CD8-positive, alpha-beta T cell (primary cell): ENCODE measurements at regions of chr9 and their contacts with region 1.

Region 1: DNA sequence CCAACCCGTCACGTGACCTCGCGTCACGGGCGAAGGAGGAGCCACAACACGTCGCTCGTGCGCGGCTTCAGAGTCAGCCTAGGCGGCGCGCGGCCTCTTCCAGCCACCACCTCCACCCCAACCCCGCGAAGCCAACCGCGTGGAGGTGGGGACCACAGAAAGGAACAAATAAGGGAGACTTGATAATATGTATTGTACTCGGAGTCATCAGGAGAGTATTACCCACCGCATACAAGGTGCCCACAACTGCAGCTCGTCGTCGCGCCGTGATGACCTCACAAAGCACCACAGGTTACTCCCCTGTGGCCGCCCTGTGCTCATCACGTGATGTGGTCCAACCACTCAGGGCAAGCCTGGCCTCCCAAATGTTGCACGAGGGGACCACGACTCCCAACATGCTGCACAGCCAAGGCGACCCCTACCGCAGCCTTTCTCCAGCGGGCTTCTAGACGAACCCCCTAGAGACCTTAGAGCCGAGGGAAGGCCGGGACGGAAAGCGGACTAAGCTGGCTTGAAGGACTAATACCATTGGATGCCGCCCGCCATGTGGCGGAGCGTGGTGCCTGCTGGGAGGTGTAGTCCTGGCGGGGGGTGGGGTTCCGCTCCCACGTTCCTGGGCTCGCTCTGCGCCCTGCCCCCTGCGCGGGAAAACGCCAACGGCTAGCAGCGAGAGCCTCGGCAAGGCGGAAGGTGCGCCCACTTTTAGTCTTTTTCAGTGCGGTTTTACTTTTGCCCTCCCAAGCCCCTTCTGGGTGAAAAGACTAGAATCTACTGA is 423 bp upstream of the UBAP2 start:
- DNase-seq: peak; percentile 92 to 99 (median 97)
- ATAC-seq: peak; percentile 81
- H3K4me3 ChIP-seq: peak overlapping the region; percentile 76 to 79
- H3K4me3 Mint-ChIP-seq: peak overlapping the region; percentile 97
- H3K27ac ChIP-seq: peak overlapping the region; percentile 87 to 95
- H3K27ac Mint-ChIP-seq: peak overlapping the region; percentile 100
- H3K4me1 ChIP-seq: peaks cover 23% of the 10 kb centered on the region
- H3K4me1 Mint-ChIP-seq: peaks cover 29% of the 10 kb centered on the region
- H3K27me3 ChIP-seq: no peaks in the 10 kb centered on the region
- H3K27me3 Mint-ChIP-seq: no peaks in the 10 kb centered on the region
- CTCF ChIP-seq: no peak

Region 2: GRCh38 chr9:34084562-34084961 is 35.5 kb after region 1 on chr9:
- CTCF ChIA-PET with region 1: no interaction called
- POLR2A ChIA-PET with region 1: no interaction called
- intact Hi-C with region 1: no loop called
- DNase-seq: no peak
- ATAC-seq: no peak
- H3K4me3 ChIP-seq: no peak overlapping the region
- H3K4me3 Mint-ChIP-seq: no peak overlapping the region
- H3K27ac ChIP-seq: no peak overlapping the region
- H3K27ac Mint-ChIP-seq: peak overlapping the region; percentile 41
- H3K4me1 ChIP-seq: no peaks in the 10 kb centered on the region
- H3K4me1 Mint-ChIP-seq: no peaks in the 10 kb centered on the region
- H3K27me3 ChIP-seq: no peaks in the 10 kb centered on the region
- H3K27me3 Mint-ChIP-seq: no peaks in the 10 kb centered on the region
- CTCF ChIP-seq: no peak

Region 3: GRCh38 chr9:34126207-34127034 is 77.3 kb after region 1 on chr9 and contains the start of gene DCAF12:
- CTCF ChIA-PET with region 1: no interaction called
- POLR2A ChIA-PET with region 1: interaction called, 3 read pairs
- intact Hi-C with region 1: loop called (anchors 1 kb)
- DNase-seq: peak; percentile 82 to 96 (median 90)
- ATAC-seq: peak; percentile 96
- H3K4me3 ChIP-seq: peak within 1 kb of the TSS; percentile 89 to 96
- H3K4me3 Mint-ChIP-seq: peak within 1 kb of the TSS; percentile 98
- H3K27ac ChIP-seq: peak within 1 kb of the TSS; percentile 79 to 92
- H3K27ac Mint-ChIP-seq: peak within 1 kb of the TSS; percentile 97
- H3K4me1 ChIP-seq: peaks cover 39% of the 10 kb centered on the region
- H3K4me1 Mint-ChIP-seq: peaks cover 49% of the 10 kb centered on the region
- H3K27me3 ChIP-seq: no peaks in the 10 kb centered on the region
- H3K27me3 Mint-ChIP-seq: no peaks in the 10 kb centered on the region
- CTCF ChIP-seq: no peak
- total RNA-seq, gene DCAF12: 4.0 to 4.1 TPM